ENCODE measurements at regions of chr3 and their contacts with region 1.

Region 1: DNA sequence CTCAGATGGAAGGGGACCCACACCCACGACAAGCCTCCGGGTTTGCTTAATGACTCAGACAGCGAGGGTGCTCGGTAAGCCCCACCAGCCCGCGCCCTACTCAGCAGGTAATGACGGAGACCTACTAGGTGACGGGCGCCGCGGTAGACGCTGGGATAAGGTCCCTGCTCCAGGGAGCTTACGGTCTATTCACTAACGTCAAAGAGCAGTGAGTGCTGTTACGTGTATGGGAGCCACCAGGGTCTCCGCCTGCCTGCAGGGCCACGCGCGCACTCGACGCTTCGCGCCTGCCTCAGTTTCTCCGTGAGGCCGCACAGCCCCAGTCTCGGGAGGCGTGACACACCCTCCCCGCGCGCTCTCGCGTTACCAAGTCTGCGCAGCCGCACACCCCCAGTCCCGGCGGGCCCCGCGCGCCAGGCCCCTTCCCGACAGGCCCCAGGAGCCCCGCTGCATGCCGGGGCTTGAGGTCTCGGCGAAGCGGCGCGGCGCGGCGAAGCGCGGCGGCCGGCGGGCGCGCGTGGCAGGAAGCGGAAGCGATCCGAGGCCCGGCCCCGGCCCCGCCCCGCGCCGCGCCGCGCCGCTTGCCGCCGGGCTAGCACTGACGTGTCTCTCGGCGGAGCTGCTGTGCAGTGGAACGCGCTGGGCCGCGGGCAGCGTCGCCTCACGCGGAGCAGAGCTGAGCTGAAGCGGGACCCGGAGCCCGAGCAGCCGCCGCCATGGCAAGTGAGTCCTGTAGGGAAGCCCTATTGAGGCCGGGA is at the start of gene SEC61A1:
- DNase-seq: peak; percentile 94 to 96 (median 95)
- H3K4me3 ChIP-seq: peak within 1 kb of the TSS; percentile 80 to 91
- H3K4me3 Mint-ChIP-seq: peak within 1 kb of the TSS; percentile 92 to 100 (median 98)
- H3K27ac ChIP-seq: peak within 1 kb of the TSS; percentile 93
- H3K27ac Mint-ChIP-seq: peak within 1 kb of the TSS; percentile 94 to 99 (median 98)
- H3K4me1 ChIP-seq: peaks cover 38% of the 10 kb centered on the region
- H3K4me1 Mint-ChIP-seq: peaks cover 35 to 58% (median 42%) of the 10 kb centered on the region in 4 donors
- H3K27me3 ChIP-seq: no peaks in the 10 kb centered on the region
- H3K27me3 Mint-ChIP-seq: no peaks in the 10 kb centered on the region
- total RNA-seq, gene SEC61A1: 203 to 212 TPM

Region 2: GRCh38 chr3:126475413-126476114 is 1576.5 kb before region 1 on chr3 and contains the start of gene ZXDC:
- CTCF ChIA-PET with region 1: no interaction called
- POLR2A ChIA-PET with region 1: no interaction called
- intact Hi-C with region 1: loop called (anchors 10 kb)
- DNase-seq: peak; percentile 90 to 93 (median 92)
- H3K4me3 ChIP-seq: peak within 1 kb of the TSS; percentile 60 to 73
- H3K4me3 Mint-ChIP-seq: peak within 1 kb of the TSS; percentile 87 to 94 (median 92)
- H3K27ac ChIP-seq: peak within 1 kb of the TSS; percentile 64
- H3K27ac Mint-ChIP-seq: peak within 1 kb of the TSS; percentile 83 to 98 (median 92)
- H3K4me1 ChIP-seq: peaks cover 36% of the 10 kb centered on the region
- H3K4me1 Mint-ChIP-seq: peaks cover 30 to 55% (median 44%) of the 10 kb centered on the region in 4 donors
- H3K27me3 ChIP-seq: no peaks in the 10 kb centered on the region
- H3K27me3 Mint-ChIP-seq: no peaks in the 10 kb centered on the region
- total RNA-seq, gene ZXDC: 58.2 to 66.3 TPM

Region 3: GRCh38 chr3:127590593-127591477 is 461.2 kb before region 1 on chr3 and contains the start of gene TPRA1:
- CTCF ChIA-PET with region 1: no interaction called
- POLR2A ChIA-PET with region 1: no interaction called
- intact Hi-C with region 1: loop called (anchors 2 kb)
- DNase-seq: peak; percentile 83 to 90 (median 88)
- H3K4me3 ChIP-seq: peak within 1 kb of the TSS; percentile 81 to 83
- H3K4me3 Mint-ChIP-seq: peak within 1 kb of the TSS; percentile 96 to 100 (median 98)
- H3K27ac ChIP-seq: peak within 1 kb of the TSS; percentile 73
- H3K27ac Mint-ChIP-seq: peak within 1 kb of the TSS; percentile 93 to 98 (median 96)
- H3K4me1 ChIP-seq: peaks cover 26% of the 10 kb centered on the region
- H3K4me1 Mint-ChIP-seq: peaks cover 16 to 50% (median 36%) of the 10 kb centered on the region in 4 donors
- H3K27me3 ChIP-seq: no peaks in the 10 kb centered on the region
- H3K27me3 Mint-ChIP-seq: no peaks in the 10 kb centered on the region
- total RNA-seq, gene TPRA1: 28.3 to 29.7 TPM

Region 4: DNA sequence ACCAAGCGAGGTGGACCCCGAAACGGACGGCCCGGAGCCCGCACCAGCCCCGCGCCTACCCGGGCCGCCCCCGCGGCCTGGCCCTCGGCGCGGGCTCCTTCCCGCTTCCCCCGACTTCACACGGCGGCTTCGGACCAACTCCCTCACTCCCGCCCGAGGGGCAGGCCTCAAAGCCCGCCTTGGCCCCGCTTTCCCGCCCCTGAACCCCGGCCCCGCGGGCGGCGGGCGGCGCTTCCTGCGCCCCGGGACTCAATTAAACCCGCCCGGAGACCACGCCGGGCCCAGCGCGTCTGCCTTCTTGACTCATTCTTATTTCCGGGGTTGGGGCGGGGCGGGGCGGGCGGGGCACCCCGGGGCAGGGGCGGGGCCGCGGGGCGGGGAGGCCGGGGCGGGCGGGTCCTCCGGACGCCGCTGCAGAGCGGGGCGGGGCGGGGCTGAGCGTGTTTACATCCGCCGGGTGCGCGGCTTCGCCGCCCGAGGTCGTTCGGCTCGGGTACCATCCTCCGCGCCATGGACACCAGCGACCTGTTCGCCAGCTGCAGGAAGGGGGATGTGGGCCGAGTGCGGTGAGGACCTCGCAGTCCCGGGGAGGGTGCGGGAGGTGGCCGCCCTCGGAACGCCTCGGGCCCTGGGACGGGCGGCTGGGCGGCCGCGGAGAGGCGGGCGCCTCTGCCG is 379.4 kb before region 1 on chr3 and contains the start of gene ABTB1:
- CTCF ChIA-PET with region 1: no interaction called
- POLR2A ChIA-PET with region 1: no interaction called
- intact Hi-C with region 1: loop called (anchors 1 kb)
- DNase-seq: peak; percentile 79 to 86 (median 85)
- H3K4me3 ChIP-seq: peak within 1 kb of the TSS; percentile 61 to 80
- H3K4me3 Mint-ChIP-seq: peak within 1 kb of the TSS; percentile 88 to 94 (median 92)
- H3K27ac ChIP-seq: peak within 1 kb of the TSS; percentile 86
- H3K27ac Mint-ChIP-seq: peak within 1 kb of the TSS; percentile 90 to 98 (median 94)
- H3K4me1 ChIP-seq: peaks cover 31% of the 10 kb centered on the region
- H3K4me1 Mint-ChIP-seq: peaks cover 18 to 41% (median 28%) of the 10 kb centered on the region in 4 donors
- H3K27me3 ChIP-seq: no peaks in the 10 kb centered on the region
- H3K27me3 Mint-ChIP-seq: no peaks in the 10 kb centered on the region
- total RNA-seq, gene ABTB1: 167 to 169 TPM

Region 5: DNA sequence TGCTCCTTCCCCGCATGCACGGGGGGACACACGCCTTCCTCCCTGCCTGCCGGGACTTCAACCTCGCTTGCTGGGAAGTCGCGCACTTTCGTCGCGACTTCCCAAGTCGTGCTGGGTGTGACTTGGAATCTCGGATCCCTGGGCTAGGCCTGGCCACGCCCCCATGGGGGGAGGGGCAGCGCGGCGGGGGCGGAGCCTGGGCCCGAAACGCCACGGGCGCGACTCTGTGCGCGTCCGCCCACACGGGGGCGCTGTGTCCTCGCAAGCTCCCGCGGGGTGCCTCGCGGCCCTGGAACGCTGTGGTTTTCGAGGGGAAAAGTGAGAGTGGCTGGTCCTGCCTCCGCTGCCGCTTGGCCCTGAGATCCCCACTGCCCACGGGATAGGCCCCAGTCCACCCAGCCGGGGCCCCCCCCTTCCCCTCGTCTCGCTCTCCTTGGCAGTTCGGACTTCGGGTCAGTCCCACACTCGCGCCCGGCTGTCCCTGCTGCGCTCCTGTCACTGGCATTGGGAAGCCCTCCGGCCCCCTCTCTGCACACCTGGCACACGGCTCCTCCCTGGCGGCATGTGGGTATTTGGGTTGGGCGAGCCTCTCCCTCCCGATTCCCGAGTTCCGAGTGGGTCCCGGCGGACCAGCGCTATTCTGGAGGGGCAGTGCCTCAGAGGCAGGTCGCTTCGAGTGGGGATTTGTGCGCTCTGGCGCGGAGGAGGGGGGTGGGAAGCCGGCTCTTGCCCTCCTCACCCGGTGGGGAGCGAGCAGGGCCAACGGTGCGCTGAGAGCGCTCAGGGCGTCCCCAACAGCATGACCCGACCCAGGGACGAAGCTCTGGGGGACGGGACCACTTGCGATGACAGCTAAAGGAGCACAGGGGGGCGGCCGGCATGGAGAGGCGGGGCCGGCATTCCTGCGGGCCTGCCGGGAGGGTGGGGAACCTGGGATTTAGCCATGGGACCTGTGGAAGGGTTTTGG is 23.8 kb after region 1 on chr3:
- CTCF ChIA-PET with region 1: interaction called, 5 read pairs
- POLR2A ChIA-PET with region 1: interaction called, 8 read pairs
- intact Hi-C with region 1: loop called (anchors 1 kb)
- DNase-seq: peak; percentile 81 to 85 (median 82)
- H3K4me3 ChIP-seq: peak overlapping the region; percentile 29 to 39
- H3K4me3 Mint-ChIP-seq: peak overlapping the region; percentile 65 to 82 (median 75)
- H3K27ac ChIP-seq: peak overlapping the region; percentile 14
- H3K27ac Mint-ChIP-seq: peak overlapping the region in 6 of 7 donors; percentile 37 to 85 (median 64)
- H3K4me1 ChIP-seq: peaks cover 20% of the 10 kb centered on the region
- H3K4me1 Mint-ChIP-seq: peaks cover 2 to 27% (median 6%) of the 10 kb centered on the region in 4 donors
- H3K27me3 ChIP-seq: no peaks in the 10 kb centered on the region
- H3K27me3 Mint-ChIP-seq: no peaks in the 10 kb centered on the region

Region 6: DNA sequence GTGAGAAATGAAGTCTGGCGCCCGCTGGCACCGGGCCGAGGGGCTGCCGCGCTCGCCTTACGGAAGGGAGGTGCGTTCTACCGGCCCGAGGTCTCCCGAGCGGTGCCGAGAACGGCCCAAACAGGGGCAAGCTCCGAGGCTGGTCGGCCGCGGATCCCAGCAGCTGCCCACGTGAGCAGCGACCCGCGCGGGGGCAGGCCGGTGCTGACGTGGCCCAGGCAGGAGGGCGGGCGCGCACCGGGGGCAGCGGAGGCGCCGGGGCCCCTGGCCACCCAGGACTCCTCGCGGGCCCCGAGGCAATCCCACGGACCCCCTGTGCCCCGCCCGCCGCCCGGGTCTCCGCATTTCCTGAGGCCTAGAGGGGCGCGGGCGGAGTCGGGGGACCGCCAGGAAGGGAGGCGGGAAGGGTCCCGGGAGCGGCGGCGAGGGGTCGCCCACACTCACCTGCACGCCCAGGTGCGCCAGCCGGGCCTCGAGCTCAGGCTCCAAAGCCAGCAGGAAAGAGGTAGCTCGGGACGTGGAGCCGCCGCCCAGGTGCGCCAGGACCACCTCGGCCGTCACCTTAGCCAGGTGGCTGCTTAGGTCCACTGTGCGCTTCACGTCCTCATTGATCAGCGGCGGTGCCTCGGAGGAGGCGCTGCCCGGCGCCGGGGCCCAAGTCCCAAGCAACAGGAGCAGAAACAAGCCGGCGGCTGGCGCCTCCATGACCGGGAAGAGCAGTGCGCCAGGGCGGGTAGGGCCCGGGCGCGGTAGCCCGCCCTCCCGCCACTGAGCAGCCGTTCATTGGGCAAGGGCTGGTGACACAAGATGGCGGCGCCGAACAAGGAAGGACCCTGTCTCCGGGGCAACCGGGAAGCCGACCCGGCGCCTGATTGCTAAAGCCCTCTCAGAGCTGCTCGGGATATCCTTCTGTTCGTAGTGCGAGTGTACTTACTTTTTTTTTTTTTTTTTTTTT is 598.4 kb after region 1 on chr3 and contains the start of gene RPN1:
- CTCF ChIA-PET with region 1: no interaction called
- POLR2A ChIA-PET with region 1: no interaction called
- intact Hi-C with region 1: loop called (anchors 5 kb)
- DNase-seq: peak; percentile 96 to 99 (median 97)
- H3K4me3 ChIP-seq: peak within 1 kb of the TSS; percentile 84 to 89
- H3K4me3 Mint-ChIP-seq: peak within 1 kb of the TSS; percentile 85 to 94 (median 88)
- H3K27ac ChIP-seq: peak within 1 kb of the TSS; percentile 92
- H3K27ac Mint-ChIP-seq: peak within 1 kb of the TSS; percentile 88 to 96 (median 93)
- H3K4me1 ChIP-seq: peaks cover 26% of the 10 kb centered on the region
- H3K4me1 Mint-ChIP-seq: peaks cover 24 to 54% (median 34%) of the 10 kb centered on the region in 4 donors
- H3K27me3 ChIP-seq: no peaks in the 10 kb centered on the region
- H3K27me3 Mint-ChIP-seq: no peaks in the 10 kb centered on the region
- total RNA-seq, gene RPN1: 121 to 127 TPM

Measured in CD4-positive, alpha-beta memory T cell (primary cell).